ENCODE measurements at regions of chr4 and their contacts with region 1.

Region 1: DNA sequence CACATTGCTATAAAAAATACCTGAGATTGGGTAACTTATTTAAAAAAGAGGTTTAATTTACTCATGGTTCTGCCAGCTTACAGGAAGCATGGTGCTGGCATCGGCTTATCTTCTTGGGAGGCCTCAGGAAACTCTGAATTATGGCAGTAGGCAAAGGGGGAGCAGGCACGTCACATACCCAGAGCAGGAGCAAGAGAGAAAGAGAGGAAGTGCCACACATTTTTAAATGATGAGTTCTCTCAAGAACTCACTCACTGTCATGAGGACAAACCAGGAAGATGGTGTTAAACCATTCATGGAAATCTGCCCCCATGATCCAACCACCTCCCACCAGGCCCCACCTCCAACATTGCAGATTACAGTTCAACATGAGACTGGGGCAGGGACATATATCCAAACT is 10.0 kb upstream of the AFF1 start:
- DNase-seq: no peak
- H3K4me3 ChIP-seq: no peak overlapping the region
- H3K27ac ChIP-seq: no peak overlapping the region
- H3K4me1 ChIP-seq: peaks cover 0 to 15% (median 0%) of the 10 kb centered on the region in 4 donors
- H3K27me3 ChIP-seq: no peaks in the 10 kb centered on the region
- CTCF ChIP-seq: no peak
- EP300 ChIP-seq: no peak
- POLR2A ChIP-seq: no peak

Region 2: DNA sequence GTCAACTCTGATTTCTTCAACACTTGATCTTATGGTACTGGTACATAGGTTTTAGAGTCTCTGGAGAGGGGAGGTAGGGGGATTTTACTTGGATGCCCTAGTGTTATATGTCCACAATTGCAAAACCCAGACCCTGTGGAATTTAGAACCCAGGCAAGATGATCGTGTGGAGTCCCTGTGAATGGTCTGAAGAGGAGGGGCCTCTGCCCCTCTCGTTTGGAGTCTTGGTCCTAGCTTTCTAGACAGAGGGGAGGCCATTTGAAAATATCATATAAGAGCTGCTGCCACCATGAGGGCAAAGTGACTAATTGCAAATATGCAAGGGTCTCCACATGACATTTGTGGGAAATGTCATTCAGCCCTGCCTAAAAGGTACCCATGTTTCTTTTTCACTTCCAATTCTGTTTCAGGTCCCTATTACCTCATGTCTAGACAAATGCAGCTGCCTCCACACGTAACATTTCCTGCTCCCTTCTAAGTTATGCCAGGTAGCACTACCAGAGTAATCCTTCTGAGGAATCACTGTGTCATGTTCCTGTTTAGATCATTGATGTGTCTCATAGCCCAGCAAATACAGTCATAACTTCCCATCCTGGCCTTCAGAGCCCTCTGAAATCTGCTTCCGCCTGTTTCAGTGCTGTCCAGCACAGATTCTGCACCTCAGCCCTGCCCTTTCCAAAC is 168.8 kb after region 1 on chr4:
- intact Hi-C with region 1: loop called (anchors 5 kb)
- DNase-seq: no peak
- H3K4me3 ChIP-seq: no peak overlapping the region
- H3K27ac ChIP-seq: peak overlapping the region; percentile 15 to 59 (median 44)
- H3K4me1 ChIP-seq: peaks cover 0 to 45% (median 33%) of the 10 kb centered on the region in 4 donors
- H3K27me3 ChIP-seq: no peaks in the 10 kb centered on the region
- CTCF ChIP-seq: peak; percentile 28 to 58 (median 44)
- EP300 ChIP-seq: no peak
- POLR2A ChIP-seq: no peak

Region 3: GRCh38 chr4:87150498-87151261 is 225.9 kb after region 1 on chr4:
- intact Hi-C with region 1: loop called (anchors 5 kb)
- DNase-seq: no peak
- H3K4me3 ChIP-seq: no peak overlapping the region
- H3K27ac ChIP-seq: peak overlapping the region in 3 of 4 donors; percentile 53 to 70 (median 63)
- H3K4me1 ChIP-seq: peaks cover 0 to 35% (median 22%) of the 10 kb centered on the region in 4 donors
- H3K27me3 ChIP-seq: no peaks in the 10 kb centered on the region
- CTCF ChIP-seq: peak; percentile 70 to 91 (median 86)
- EP300 ChIP-seq: no peak
- POLR2A ChIP-seq: no peak

Region 4: DNA sequence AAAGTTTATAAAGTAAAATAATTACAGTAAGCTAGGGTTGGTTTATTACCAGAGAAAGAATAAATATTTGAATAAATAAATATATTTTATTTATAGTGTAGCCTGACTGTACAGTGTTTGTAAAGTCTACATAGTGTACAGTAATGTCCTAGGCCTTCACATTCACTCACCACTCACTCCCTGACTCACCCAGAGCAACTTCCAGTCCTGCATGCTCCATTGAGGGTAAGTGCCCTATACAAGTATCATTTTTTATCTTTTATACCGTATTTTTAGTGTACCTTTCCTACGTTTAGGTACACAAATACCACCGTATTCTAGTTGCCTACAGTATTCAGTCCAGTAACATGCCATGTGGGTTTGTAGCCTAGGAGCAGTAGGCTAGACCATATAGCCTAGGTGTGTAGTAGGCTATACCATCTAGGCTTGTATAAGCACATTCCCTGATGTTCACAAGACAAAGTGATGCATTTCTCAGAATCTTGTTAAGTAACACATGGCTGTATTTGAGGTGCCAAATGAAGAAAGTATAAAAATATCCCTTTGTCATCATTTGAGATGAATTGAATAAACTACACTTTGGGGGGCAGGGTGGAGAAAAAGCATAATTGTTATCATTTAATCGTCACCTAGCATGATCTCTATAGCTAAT is 310.3 kb after region 1 on chr4:
- intact Hi-C with region 1: loop called (anchors 2 kb)
- DNase-seq: no peak
- H3K4me3 ChIP-seq: peak overlapping the region; percentile 25 to 49 (median 45)
- H3K27ac ChIP-seq: peak overlapping the region in 2 of 4 donors; percentile 35 to 54
- H3K4me1 ChIP-seq: peaks cover 0 to 14% (median 2%) of the 10 kb centered on the region in 4 donors
- H3K27me3 ChIP-seq: no peaks in the 10 kb centered on the region
- CTCF ChIP-seq: no peak
- EP300 ChIP-seq: no peak
- POLR2A ChIP-seq: no peak